Common myeloid progenitor, CD34-positive (primary cell): ENCODE measurements at regions of chr16 and their contacts with region 1.

Region 1: GRCh38 chr16:57725554-57726330 is 9.8 kb upstream of the KATNB1 start:
- DNase-seq: no peak
- H3K4me3 ChIP-seq: no peak overlapping the region
- H3K27ac ChIP-seq: no peak overlapping the region
- H3K4me1 ChIP-seq: peaks cover 0 to 40% (median 8%) of the 10 kb centered on the region in 4 experiments
- H3K27me3 ChIP-seq: no peaks in the 10 kb centered on the region

Region 2: DNA sequence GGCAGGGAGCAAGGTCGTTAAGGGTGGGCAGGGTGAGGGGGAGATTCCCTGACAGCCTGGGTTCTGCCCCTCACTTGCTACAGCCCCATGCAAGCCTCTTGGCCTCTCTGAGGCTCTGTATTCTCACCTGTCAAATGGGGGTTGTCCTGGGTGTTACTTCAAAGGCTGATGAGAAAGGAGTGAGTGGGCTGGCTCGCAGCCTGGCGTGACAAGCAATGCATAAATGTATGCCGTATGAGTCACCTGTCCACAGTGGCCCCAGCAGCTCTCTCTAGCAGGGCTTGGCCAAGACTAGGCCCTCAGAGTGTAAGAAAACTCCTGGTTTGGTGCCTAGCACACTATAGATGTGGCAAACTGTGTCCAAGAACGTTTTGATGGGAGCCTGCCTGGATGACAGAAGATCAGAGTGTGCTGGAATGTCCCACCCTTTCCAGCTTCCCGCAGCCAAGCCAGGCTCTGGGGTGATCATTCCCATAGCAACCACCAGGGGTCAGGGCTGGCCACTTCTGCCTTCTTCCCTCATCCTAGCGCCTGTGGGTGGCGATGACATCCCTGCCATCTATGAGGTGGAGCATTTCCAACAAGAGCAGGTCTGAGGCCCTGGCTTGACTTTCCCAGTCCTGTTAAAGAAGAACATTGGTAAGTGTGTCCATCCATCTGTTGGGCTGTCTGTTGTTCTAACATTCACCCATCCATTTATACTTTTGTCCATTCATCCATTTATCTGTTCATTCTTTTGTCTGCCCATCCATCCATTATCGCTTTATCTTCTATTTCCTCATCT is 134.5 kb before region 1 on chr16:
- CTCF ChIA-PET with region 1: interaction called, 14 read pairs
- POLR2A ChIA-PET with region 1: no interaction called
- DNase-seq: peak; percentile 73 to 85 (median 81)
- H3K4me3 ChIP-seq: peak overlapping the region in 1 of 7 experiments; percentile 14
- H3K27ac ChIP-seq: no peak overlapping the region
- H3K4me1 ChIP-seq: peaks cover 10 to 37% (median 34%) of the 10 kb centered on the region in 4 experiments
- H3K27me3 ChIP-seq: no peaks in the 10 kb centered on the region

Region 3: DNA sequence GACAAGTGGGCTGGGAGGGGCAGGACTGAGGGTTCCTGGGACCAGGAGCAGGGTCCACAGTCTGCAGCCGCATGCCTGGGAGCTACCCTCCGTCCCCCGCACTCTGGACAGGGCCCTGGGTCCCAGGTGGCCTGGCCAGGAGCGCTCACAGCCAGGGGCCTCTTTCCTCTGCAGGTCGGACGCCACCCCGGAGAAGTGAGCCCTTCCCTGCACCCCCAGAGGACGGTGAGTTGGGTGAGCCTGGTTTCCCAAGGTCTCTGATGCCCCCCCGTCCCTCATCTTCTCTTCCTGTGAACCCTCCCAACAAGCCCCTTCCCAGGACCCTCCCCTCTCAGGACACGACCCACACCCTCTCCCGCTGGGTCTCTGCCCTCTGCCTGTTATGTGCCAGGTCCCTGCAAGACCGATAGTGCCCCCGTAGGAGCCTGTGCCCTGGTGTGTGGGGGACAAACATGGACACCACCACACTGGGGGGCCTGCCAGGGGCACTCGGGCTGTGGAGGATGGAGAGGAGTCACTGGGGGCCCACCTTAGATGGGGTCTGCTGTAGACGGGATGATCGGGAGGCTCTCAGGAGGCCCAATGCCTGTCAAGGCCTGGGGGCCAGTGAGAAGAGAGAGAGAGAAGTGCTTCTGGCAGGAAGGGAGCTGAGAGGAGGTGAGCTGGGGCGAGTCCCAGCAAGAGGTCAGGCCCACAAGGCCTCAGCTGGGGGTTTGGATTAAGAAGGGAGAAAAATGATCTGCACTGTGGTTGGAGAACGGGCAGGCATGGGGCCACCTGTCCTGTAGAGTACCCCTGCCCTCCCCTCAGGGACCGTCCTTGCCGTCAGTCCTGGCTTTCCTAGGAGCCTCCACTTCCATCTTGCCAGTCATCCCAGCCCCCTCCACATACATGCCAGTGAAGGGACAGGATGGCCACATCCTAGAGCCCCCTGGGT is 28.3 kb after region 1 on chr16:
- CTCF ChIA-PET with region 1: no interaction called
- POLR2A ChIA-PET with region 1: no interaction called
- DNase-seq: no peak
- H3K4me3 ChIP-seq: no peak overlapping the region
- H3K27ac ChIP-seq: no peak overlapping the region
- H3K4me1 ChIP-seq: peaks cover 0 to 5% (median 0%) of the 10 kb centered on the region in 4 experiments
- H3K27me3 ChIP-seq: no peaks in the 10 kb centered on the region

Region 4: GRCh38 chr16:57786632-57787518 is 61.1 kb after region 1 on chr16:
- CTCF ChIA-PET with region 1: no interaction called
- POLR2A ChIA-PET with region 1: no interaction called
- DNase-seq: no peak
- H3K4me3 ChIP-seq: no peak overlapping the region
- H3K27ac ChIP-seq: no peak overlapping the region
- H3K4me1 ChIP-seq: peaks cover 0 to 12% (median 5%) of the 10 kb centered on the region in 4 experiments
- H3K27me3 ChIP-seq: no peaks in the 10 kb centered on the region

Region 5: DNA sequence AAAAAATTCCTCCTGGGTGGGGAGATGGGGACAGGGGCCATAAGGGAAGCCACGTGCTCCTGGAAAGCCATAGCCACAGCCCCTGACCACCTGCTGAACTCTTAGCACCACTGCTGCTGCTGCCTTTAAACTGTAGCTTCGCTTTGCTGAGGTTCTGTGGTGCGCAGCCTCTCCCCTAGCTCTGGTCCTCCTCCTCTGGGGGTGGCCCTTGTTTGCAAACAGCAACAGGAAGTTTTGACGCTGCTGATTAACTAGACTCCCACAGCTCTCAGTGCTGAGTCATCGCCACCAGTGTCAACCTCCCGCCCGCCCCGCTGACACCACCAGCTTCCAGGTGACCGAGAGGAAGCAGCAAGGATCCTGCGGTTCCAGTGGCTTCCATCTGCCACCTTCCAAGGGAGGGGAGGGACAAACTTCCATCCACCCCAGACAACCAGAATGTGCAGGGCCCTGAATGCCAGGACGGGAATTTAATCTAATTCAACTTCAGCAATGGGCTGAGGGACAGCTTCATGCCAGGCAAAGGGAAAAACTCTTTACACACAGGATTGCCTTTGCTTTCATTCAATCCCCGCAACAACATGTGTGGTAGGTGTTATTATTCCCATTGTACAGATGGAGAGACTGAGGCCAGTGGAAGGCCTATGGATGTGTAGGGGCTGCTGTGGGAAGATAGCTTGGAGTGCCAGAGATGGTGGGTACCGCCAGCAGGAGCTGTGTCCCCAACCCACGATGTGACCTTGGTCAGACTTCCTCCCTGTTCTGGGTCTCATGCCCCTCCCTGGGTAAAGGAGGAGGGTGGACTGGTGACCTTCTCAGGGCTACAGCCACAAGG is 84.7 kb after region 1 on chr16:
- CTCF ChIA-PET with region 1: no interaction called
- POLR2A ChIA-PET with region 1: no interaction called
- DNase-seq: peak; percentile 98 to 100 (median 99)
- H3K4me3 ChIP-seq: peak overlapping the region in 3 of 7 experiments; percentile 32 to 59 (median 52)
- H3K27ac ChIP-seq: peak overlapping the region in 1 of 2 experiments; percentile 65
- H3K4me1 ChIP-seq: peaks cover 9 to 55% (median 46%) of the 10 kb centered on the region in 4 experiments
- H3K27me3 ChIP-seq: no peaks in the 10 kb centered on the region